SK-N-SH (cell line): ENCODE measurements at regions of chr2 and their contacts with region 1.

Region 1: GRCh38 chr2:26745609-26746327 is 18.3 kb upstream of the SLC35F6 start:
- DNase-seq: peak; percentile 85
- H3K4me3 ChIP-seq: no peak overlapping the region
- H3K27ac ChIP-seq: no peak overlapping the region
- H3K4me1 ChIP-seq: peaks cover 0 to 3% of the 10 kb centered on the region in 2 experiments; a peak in 1 of 4 replicates
- H3K27me3 ChIP-seq: no peaks in the 10 kb centered on the region
- CTCF ChIP-seq: peak; percentile 99
- EP300 ChIP-seq: no peak
- RAD21 ChIP-seq: peak; percentile 100

Region 2: GRCh38 chr2:25491966-25492532 is 1253.7 kb before region 1 on chr2:
- CTCF ChIA-PET with region 1: no interaction called
- POLR2A ChIA-PET with region 1: no interaction called
- DNase-seq: peak; percentile 28
- H3K4me3 ChIP-seq: no peak overlapping the region
- H3K27ac ChIP-seq: peak overlapping the region; percentile 2 to 68; a peak in 3 of 4 replicates
- H3K4me1 ChIP-seq: peaks cover 0 to 8% of the 10 kb centered on the region in 2 experiments; a peak in 3 of 4 replicates
- H3K27me3 ChIP-seq: no peaks in the 10 kb centered on the region
- CTCF ChIP-seq: no peak
- EP300 ChIP-seq: no peak; a peak in 1 of 4 replicates
- RAD21 ChIP-seq: no peak

Region 3: GRCh38 chr2:26591619-26592505 is 153.9 kb before region 1 on chr2:
- CTCF ChIA-PET with region 1: interaction called, 76 read pairs
- POLR2A ChIA-PET with region 1: no interaction called
- DNase-seq: no peak
- H3K4me3 ChIP-seq: no peak overlapping the region
- H3K27ac ChIP-seq: no peak overlapping the region
- H3K4me1 ChIP-seq: peaks cover 0 to 10% of the 10 kb centered on the region in 2 experiments; a peak in 1 of 4 replicates
- H3K27me3 ChIP-seq: peaks cover 82% of the 10 kb centered on the region
- CTCF ChIP-seq: no peak
- EP300 ChIP-seq: no peak
- RAD21 ChIP-seq: no peak

Region 4: GRCh38 chr2:26640331-26640745 is 105.4 kb before region 1 on chr2:
- CTCF ChIA-PET with region 1: interaction called, 16 read pairs
- POLR2A ChIA-PET with region 1: no interaction called
- DNase-seq: peak; percentile 65
- H3K4me3 ChIP-seq: no peak overlapping the region
- H3K27ac ChIP-seq: no peak overlapping the region
- H3K4me1 ChIP-seq: peaks cover 0 to 10% of the 10 kb centered on the region in 2 experiments; a peak in 1 of 4 replicates
- H3K27me3 ChIP-seq: peaks cover 18% of the 10 kb centered on the region; the same call in 1 of the 2 replicates
- CTCF ChIP-seq: no peak
- EP300 ChIP-seq: no peak
- RAD21 ChIP-seq: no peak

Region 5: GRCh38 chr2:26685989-26686839 is 59.6 kb before region 1 on chr2:
- CTCF ChIA-PET with region 1: interaction called, 17 read pairs
- POLR2A ChIA-PET with region 1: no interaction called
- DNase-seq: no peak
- H3K4me3 ChIP-seq: no peak overlapping the region
- H3K27ac ChIP-seq: no peak overlapping the region
- H3K4me1 ChIP-seq: peaks cover 0 to 49% of the 10 kb centered on the region in 2 experiments; a peak in 2 of 4 replicates
- H3K27me3 ChIP-seq: peaks cover 60% of the 10 kb centered on the region
- CTCF ChIP-seq: no peak
- EP300 ChIP-seq: no peak
- RAD21 ChIP-seq: no peak

Region 6: GRCh38 chr2:26712486-26713465 is 33.0 kb before region 1 on chr2:
- CTCF ChIA-PET with region 1: interaction called, 41 read pairs
- POLR2A ChIA-PET with region 1: no interaction called
- DNase-seq: peak; percentile 81
- H3K4me3 ChIP-seq: no peak overlapping the region
- H3K27ac ChIP-seq: peak overlapping the region in 1 of 2 experiments; percentile 70; a peak in 2 of 4 replicates
- H3K4me1 ChIP-seq: peaks cover 0 to 58% of the 10 kb centered on the region in 2 experiments; a peak in 1 of 4 replicates
- H3K27me3 ChIP-seq: no peaks in the 10 kb centered on the region
- CTCF ChIP-seq: no peak
- EP300 ChIP-seq: no peak
- RAD21 ChIP-seq: no peak

Region 7: DNA sequence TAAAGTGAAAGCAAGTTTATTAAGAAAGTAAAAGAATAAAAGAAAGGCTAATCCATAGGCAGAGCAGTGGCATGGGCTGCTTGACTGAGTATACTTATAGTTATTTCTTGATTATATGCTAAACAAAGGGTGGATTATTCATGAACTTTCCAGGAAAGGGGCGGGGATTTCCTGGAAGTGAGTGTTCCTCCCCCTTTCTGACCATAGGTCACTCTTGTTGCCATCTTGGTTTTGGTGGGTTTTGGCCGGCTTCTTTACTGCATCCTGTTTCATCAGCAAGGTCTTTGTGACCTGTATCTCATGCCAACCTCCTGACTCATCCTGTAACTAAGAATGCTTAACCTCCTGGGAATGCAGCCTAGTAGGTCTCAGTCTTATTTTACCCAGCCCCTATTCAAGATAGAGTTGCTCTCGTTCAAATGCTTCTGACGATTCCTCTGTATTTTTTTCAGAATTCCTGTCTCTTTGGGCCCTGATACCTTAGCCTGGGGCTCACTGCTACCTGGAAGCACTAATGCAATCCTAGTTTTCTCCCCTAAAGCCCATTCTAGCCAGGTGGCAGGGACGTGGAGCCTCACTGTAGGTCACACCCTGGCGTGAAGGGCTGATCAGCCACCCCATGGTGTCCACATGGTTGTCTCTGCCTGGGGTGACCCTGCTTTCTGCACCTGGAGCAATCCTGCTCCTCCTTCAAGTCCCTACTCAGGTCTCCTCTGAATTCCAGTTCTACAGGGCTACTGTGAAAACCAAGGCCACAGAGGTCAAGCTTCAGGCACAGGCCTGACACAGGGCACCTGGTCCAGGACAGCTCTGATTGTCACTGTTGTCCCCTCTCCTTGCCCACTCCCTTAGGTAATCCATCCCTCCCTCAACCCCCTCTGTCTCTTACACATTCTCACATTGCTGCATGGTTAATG is 12.4 kb after region 1 on chr2:
- CTCF ChIA-PET with region 1: interaction called, 27 read pairs
- POLR2A ChIA-PET with region 1: no interaction called
- DNase-seq: peak; percentile 5
- H3K4me3 ChIP-seq: no peak overlapping the region
- H3K27ac ChIP-seq: peak overlapping the region; percentile 53 to 78
- H3K4me1 ChIP-seq: peaks cover 9 to 15% of the 10 kb centered on the region in 2 experiments; a peak in 3 of 4 replicates
- H3K27me3 ChIP-seq: no peaks in the 10 kb centered on the region
- CTCF ChIP-seq: no peak
- EP300 ChIP-seq: peak in 1 of 2 experiments; percentile 83; a peak in 1 of 4 replicates
- RAD21 ChIP-seq: no peak

Region 8: DNA sequence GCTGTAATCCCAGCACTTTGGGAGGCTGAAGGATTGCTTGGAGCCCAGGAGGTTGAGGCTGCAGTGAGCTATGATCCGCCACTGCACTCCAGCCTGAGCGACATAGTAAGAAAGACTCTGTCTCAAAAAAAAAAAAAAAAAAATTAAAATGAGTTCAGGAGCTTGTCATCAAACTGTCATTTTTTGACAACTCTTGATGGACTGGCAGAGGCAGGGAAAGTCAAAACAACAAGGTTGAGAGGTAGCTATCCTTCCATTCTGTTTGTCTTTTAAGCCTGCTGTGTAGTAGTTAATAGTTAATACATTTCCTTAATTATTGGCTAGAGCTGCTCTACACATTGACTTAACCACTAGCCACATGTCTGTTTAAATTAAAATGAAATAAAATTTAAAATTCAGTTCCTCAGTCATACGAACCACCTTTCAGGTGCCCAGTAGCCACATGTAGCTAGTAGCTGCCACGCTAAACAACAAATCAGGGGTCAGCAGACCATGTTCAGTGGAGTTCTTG is 124.9 kb after region 1 on chr2:
- CTCF ChIA-PET with region 1: no interaction called
- POLR2A ChIA-PET with region 1: no interaction called
- DNase-seq: no peak
- H3K4me3 ChIP-seq: no peak overlapping the region
- H3K27ac ChIP-seq: no peak overlapping the region
- H3K4me1 ChIP-seq: peaks cover 0 to 2% of the 10 kb centered on the region in 2 experiments; a peak in 1 of 4 replicates
- H3K27me3 ChIP-seq: peaks cover 38% of the 10 kb centered on the region; the same call in 1 of the 2 replicates
- CTCF ChIP-seq: no peak
- EP300 ChIP-seq: no peak
- RAD21 ChIP-seq: no peak

Region 9: DNA sequence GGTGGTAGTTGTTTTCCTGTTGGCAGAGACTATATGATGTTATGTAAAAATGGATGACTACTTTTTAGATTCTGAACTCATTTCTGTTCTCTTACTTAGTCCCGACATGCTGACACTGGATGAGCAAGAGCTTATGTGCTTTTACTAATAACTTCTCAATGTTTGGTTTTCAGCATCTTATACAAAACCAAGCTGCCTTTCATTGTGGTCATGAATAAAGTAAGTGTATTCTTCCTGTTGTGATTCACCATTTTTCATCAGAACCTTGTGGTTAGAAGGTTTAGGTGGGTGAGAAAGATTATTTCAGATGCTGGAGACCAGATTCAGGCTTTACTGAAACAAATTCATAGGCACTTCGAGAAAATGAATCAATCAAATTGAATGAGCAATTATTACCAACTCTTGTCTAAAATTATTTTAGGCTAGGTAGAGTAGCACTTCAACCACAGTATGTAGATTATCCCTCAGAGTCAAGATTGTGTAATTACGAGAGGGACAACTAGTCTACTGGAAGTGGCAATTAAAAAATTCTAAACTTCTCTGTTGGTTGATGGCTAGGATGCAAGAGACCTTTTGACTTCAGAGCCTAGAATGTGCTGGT is 892.4 kb after region 1 on chr2:
- CTCF ChIA-PET with region 1: no interaction called
- POLR2A ChIA-PET with region 1: no interaction called
- DNase-seq: no peak
- H3K4me3 ChIP-seq: no peak overlapping the region
- H3K27ac ChIP-seq: peak overlapping the region in 1 of 2 experiments; percentile 56; a peak in 2 of 4 replicates
- H3K4me1 ChIP-seq: no peaks in the 10 kb centered on the region; a peak in 1 of 4 replicates
- H3K27me3 ChIP-seq: no peaks in the 10 kb centered on the region
- CTCF ChIP-seq: no peak
- EP300 ChIP-seq: 0 out of 4 replicates have a peak, but pooled peaks of 1 of the 2 experiments have one; percentile 25
- RAD21 ChIP-seq: no peak